ENCODE measurements at regions of chr15 and their contacts with region 1.

Region 1: DNA sequence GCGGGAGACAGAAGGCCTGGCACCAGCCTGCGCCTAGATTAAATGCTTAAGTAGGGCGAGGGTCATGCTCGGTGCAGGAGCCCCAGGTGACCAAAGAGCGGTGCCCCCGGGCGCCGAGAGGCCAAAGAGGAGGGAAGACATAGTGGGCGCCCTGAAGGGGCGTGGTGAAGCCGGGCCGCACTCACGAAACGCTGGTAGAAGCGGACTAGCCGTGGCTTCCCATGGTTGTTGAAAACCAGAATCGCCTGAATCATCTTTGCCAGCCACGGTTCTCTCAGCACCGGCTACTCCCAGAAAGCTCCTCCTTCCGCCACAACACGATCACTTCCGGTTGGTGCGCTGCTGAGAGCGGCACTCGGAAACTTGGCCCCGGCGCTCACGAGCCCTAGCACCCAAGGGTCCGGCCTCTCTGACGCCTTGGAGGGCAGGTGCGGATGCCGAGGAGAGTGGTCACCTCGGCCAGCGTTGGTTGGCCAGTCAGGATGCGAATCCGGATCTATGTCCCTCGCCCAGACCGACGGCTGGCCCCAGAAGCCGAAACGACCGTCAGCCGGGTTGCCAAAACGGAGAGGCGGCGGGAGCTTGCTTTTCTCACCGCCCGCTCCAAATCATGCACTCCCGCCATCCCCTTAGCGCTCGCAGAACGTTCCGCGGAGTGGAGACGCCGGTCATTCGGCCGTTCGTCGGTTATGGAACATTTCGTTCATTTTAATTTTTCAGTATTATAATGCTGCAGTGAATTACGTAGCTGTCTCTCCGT is at the start of gene AP3S2:
- DNase-seq: peak; percentile 96
- ATAC-seq: peak; percentile 82
- H3K4me3 Mint-ChIP-seq: peak within 1 kb of the TSS; percentile 98
- H3K27ac Mint-ChIP-seq: peak within 1 kb of the TSS; percentile 97
- H3K4me1 Mint-ChIP-seq: peaks cover 43% of the 10 kb centered on the region
- H3K27me3 Mint-ChIP-seq: no peaks in the 10 kb centered on the region
- total RNA-seq, gene AP3S2: 12.4 to 15.3 TPM

Region 2: GRCh38 chr15:89334510-89335288 is 559.2 kb before region 1 on chr15 and contains the start of gene POLG:
- CTCF ChIA-PET with region 1: no interaction called
- POLR2A ChIA-PET with region 1: no interaction called
- intact Hi-C with region 1: loop called in 1 of 2 experiments (anchors 5 kb)
- DNase-seq: peak; percentile 99
- ATAC-seq: peak; percentile 92
- H3K4me3 Mint-ChIP-seq: peak within 1 kb of the TSS; percentile 80
- H3K27ac Mint-ChIP-seq: peak within 1 kb of the TSS; percentile 87
- H3K4me1 Mint-ChIP-seq: peaks cover 56% of the 10 kb centered on the region
- H3K27me3 Mint-ChIP-seq: peaks cover 2% of the 10 kb centered on the region
- total RNA-seq, gene POLG: 63.2 to 80.4 TPM

Region 3: DNA sequence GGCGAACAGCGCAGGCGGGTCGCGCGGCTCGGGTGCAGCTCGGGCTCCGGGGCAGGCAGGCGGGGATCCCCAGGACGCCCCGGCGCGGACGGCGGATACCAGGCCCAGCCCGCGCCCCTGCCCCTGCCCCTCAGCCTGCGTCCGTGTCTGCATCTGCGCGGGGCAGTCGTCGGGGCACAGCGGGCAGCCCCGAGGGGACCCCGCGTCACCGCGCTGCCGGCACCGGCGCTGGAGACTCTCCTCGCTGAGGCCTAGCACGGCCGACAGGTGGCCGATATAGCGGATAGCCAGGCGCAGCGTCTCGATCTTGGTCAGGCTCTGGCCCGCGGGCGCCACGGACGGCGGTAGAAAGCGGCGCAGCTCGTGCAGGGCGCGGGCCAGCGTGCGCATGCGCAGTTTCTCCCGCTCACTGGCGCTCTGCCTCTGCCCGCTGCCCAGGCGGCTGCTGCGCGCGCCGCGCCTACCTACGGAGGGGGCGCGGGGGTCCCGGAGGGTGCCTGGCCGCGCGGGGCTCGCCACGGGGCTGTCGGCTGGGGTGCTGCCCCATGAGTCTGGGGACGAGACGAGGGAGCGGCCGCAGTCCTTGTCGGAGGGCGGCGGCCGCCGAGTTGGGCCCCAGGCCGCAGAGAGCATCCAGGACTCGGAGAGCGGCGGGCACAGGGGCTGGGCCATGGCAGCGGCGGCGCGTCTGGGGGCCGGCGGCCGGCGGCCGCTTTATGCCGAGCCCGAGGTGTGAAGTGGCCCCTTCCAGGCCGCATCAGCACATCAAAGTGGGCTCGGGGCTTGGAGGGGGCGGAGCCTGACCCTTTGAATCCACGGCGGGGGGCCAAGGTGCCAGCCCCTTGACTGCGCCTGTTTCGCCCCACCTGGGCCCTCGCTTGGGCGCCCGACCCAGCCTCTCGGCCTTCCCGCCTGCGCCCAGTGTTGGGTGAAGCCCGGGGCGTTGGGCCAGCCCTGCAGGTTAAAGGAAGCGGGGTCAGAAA is 143.0 kb before region 1 on chr15 and contains the start of gene MESP1:
- CTCF ChIA-PET with region 1: no interaction called
- POLR2A ChIA-PET with region 1: no interaction called
- intact Hi-C with region 1: loop called in 1 of 2 experiments (anchors 5 kb)
- DNase-seq: peak; percentile 93
- ATAC-seq: peak; percentile 94
- H3K4me3 Mint-ChIP-seq: peak within 1 kb of the TSS; percentile 73
- H3K27ac Mint-ChIP-seq: no peak within 1 kb of the TSS
- H3K4me1 Mint-ChIP-seq: peaks cover 4% of the 10 kb centered on the region
- H3K27me3 Mint-ChIP-seq: peaks cover 11% of the 10 kb centered on the region
- total RNA-seq, gene MESP1: 2.9 to 4.6 TPM

Region 4: DNA sequence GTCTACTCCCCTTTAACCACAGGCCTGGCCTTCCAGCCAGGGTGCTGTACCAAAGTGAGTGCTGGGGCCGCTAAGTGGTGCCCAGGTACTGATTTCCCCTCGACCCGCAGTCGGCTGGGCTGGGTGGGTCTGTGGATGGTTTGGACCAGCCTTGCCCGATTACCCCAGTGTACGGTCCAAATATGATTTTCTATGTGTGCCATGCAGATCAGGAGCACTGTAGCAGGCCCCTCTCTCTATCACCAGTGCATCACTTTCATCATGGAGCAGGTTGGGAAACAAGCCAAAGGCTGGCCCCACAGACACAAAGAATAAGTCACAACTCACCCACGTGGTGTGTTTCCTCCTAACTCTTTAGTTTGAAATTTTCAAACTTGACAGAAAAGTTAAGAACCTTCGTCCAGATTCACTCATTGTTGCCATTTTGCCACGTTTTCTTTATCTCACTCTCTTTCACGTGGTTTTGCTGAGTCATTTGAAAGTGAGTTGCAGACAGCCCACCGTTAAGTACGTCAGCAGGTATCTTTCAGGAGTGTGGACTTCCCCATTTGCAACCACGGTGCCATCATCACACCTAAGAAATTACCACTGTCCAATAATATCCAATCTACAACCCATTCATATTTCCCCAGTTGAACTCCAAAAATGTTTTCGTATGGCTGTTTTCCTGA is 144.2 kb after region 1 on chr15:
- CTCF ChIA-PET with region 1: no interaction called
- POLR2A ChIA-PET with region 1: no interaction called
- intact Hi-C with region 1: loop called (anchors 1 kb)
- DNase-seq: peak; percentile 82
- ATAC-seq: peak; percentile 82
- H3K4me3 Mint-ChIP-seq: peak overlapping the region; percentile 6
- H3K27ac Mint-ChIP-seq: peak overlapping the region; percentile 95
- H3K4me1 Mint-ChIP-seq: peaks cover 79% of the 10 kb centered on the region
- H3K27me3 Mint-ChIP-seq: no peaks in the 10 kb centered on the region

Region 5: GRCh38 chr15:90086868-90087268 is 193.0 kb after region 1 on chr15:
- CTCF ChIA-PET with region 1: interaction called, 10 read pairs
- POLR2A ChIA-PET with region 1: no interaction called
- intact Hi-C with region 1: loop called (anchors 1 to 2 kb)
- DNase-seq: peak; percentile 75
- ATAC-seq: peak; percentile 79
- H3K4me3 Mint-ChIP-seq: no peak overlapping the region
- H3K27ac Mint-ChIP-seq: peak overlapping the region; percentile 75
- H3K4me1 Mint-ChIP-seq: peaks cover 6% of the 10 kb centered on the region
- H3K27me3 Mint-ChIP-seq: no peaks in the 10 kb centered on the region

Region 6: DNA sequence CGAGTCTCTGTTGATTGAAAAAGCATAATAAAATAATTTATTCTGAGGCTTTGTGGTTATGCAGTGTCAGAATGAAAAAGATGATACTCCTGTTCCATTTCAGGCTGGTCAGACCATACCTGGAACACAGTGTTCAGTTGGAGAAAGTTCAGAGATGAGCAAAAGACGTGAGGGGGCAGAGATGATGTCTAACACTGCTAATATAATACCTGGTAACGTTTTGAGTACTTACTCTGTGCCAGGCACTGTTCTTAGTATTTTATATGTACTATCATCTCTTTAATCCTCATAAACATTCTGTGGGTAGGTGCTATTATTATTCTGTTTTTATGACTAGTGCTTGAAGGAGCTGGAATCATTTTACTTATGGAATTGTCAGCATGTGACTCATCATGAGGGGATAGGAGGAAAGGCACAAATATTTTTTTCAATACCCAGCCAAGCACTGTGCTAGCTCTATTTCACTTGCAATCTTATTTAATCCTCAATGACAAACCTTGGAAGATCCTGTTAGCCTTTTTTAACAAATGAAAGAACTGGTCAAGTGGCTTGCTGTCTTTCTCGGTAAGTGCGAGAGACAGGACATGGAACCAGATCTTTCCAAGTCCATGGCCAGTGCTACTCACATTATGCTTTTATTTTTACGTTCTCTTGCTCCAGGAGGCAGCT is 526.0 kb after region 1 on chr15:
- CTCF ChIA-PET with region 1: no interaction called
- POLR2A ChIA-PET with region 1: no interaction called
- intact Hi-C with region 1: loop called in 1 of 2 experiments (anchors 5 kb)
- DNase-seq: peak; percentile 61
- ATAC-seq: peak; percentile 95
- H3K4me3 Mint-ChIP-seq: peak overlapping the region; percentile 47
- H3K27ac Mint-ChIP-seq: peak overlapping the region; percentile 93
- H3K4me1 Mint-ChIP-seq: peaks cover 80% of the 10 kb centered on the region
- H3K27me3 Mint-ChIP-seq: no peaks in the 10 kb centered on the region

Measured in activated CD4-positive, alpha-beta T cell treated with anti-CD3 and anti-CD28 coated beads for 36 hours (primary cell).